ENCODE measurements at regions of chr11 and their contacts with region 1.

Region 1: GRCh38 chr11:120128782-120129172 is 9.1 kb downstream of the TRIM29 start:
- DNase-seq: peak in 1 of 2 experiments; percentile 61
- H3K4me3 ChIP-seq: no peak overlapping the region
- H3K27ac ChIP-seq: no peak overlapping the region
- H3K4me1 ChIP-seq: peaks cover 24% of the 10 kb centered on the region
- H3K27me3 ChIP-seq: no peaks in the 10 kb centered on the region
- CTCF ChIP-seq: no peak

Region 2: GRCh38 chr11:119363851-119364590 is 764.8 kb before region 1 on chr11:
- CTCF ChIA-PET with region 1: no interaction called
- POLR2A ChIA-PET with region 1: no interaction called
- intact Hi-C with region 1: loop called (anchors 10 kb)
- DNase-seq: no peak
- H3K4me3 ChIP-seq: peak overlapping the region; percentile 36; the same call in 1 of the 2 replicates
- H3K27ac ChIP-seq: no peak overlapping the region
- H3K4me1 ChIP-seq: peaks cover 47% of the 10 kb centered on the region
- H3K27me3 ChIP-seq: no peaks in the 10 kb centered on the region
- CTCF ChIP-seq: no peak

Region 3: GRCh38 chr11:119641983-119642745 is 486.6 kb before region 1 on chr11:
- CTCF ChIA-PET with region 1: no interaction called
- POLR2A ChIA-PET with region 1: no interaction called
- intact Hi-C with region 1: no loop called
- DNase-seq: peak in 1 of 2 experiments; percentile 8
- H3K4me3 ChIP-seq: no peak overlapping the region
- H3K27ac ChIP-seq: no peak overlapping the region
- H3K4me1 ChIP-seq: no peaks in the 10 kb centered on the region
- H3K27me3 ChIP-seq: 0 out of 2 replicates have a peak, but pooled peaks cover 6% of the 10 kb centered on the region
- CTCF ChIP-seq: peak; percentile 90

Region 4: GRCh38 chr11:120285256-120285655 is 156.5 kb after region 1 on chr11:
- CTCF ChIA-PET with region 1: no interaction called
- POLR2A ChIA-PET with region 1: no interaction called
- intact Hi-C with region 1: no loop called
- DNase-seq: no peak
- H3K4me3 ChIP-seq: no peak overlapping the region
- H3K27ac ChIP-seq: no peak overlapping the region
- H3K4me1 ChIP-seq: peaks cover 29% of the 10 kb centered on the region
- H3K27me3 ChIP-seq: no peaks in the 10 kb centered on the region
- CTCF ChIP-seq: no peak